Mammary epithelial cell (primary cell): ENCODE measurements at regions of chr13 and their contacts with region 1.

Region 1: GRCh38 chr13:87259551-87259954 is 411.6 kb upstream of the SLITRK5 start:
- DNase-seq: no peak
- H3K4me3 ChIP-seq: no peak overlapping the region
- H3K27ac ChIP-seq: no peak overlapping the region
- H3K4me1 ChIP-seq: no peaks in the 10 kb centered on the region
- H3K27me3 ChIP-seq: no peaks in the 10 kb centered on the region
- CTCF ChIP-seq: peak; percentile 29 to 59

Region 2: GRCh38 chr13:86877441-86877840 is 382.1 kb before region 1 on chr13:
- CTCF ChIA-PET with region 1: no interaction called
- dilution Hi-C with region 1: no loop called
- in situ Hi-C with region 1: no loop called
- intact Hi-C with region 1: loop called (anchors 5 kb)
- DNase-seq: no peak
- H3K4me3 ChIP-seq: no peak overlapping the region
- H3K27ac ChIP-seq: no peak overlapping the region
- H3K4me1 ChIP-seq: no peaks in the 10 kb centered on the region
- H3K27me3 ChIP-seq: no peaks in the 10 kb centered on the region
- CTCF ChIP-seq: no peak

Region 3: GRCh38 chr13:87274209-87274819 is 14.8 kb after region 1 on chr13:
- CTCF ChIA-PET with region 1: no interaction called
- dilution Hi-C with region 1: no loop called
- in situ Hi-C with region 1: no loop called
- intact Hi-C with region 1: no loop called
- DNase-seq: peak; percentile 26
- H3K4me3 ChIP-seq: no peak overlapping the region
- H3K27ac ChIP-seq: no peak overlapping the region
- H3K4me1 ChIP-seq: no peaks in the 10 kb centered on the region
- H3K27me3 ChIP-seq: no peaks in the 10 kb centered on the region
- CTCF ChIP-seq: peak; percentile 64 to 75